Activated T-helper 2 cell treated with anti-CD3 and anti-CD28 coated beads, Interferon-gamma antibody, Interleukin-2, Interleukin-4, amounts not matched to agents 10 μg/mL and 5 μg/mL and 100 μg/mL, durations not matched to agents 14 hours and 24 hours and 36 hours (primary cell): ENCODE measurements at regions of chr4 and their contacts with region 1.

Region 1: GRCh38 chr4:83231620-83232076 is 53.0 kb downstream of the COQ2 start:
- DNase-seq: peak; percentile 60
- H3K4me3 Mint-ChIP-seq: no peak overlapping the region
- H3K27ac Mint-ChIP-seq: peak overlapping the region; percentile 2
- H3K4me1 Mint-ChIP-seq: peaks cover 54% of the 10 kb centered on the region
- H3K27me3 Mint-ChIP-seq: peaks cover 33% of the 10 kb centered on the region

Region 2: GRCh38 chr4:82868572-82868971 is 363.1 kb before region 1 on chr4:
- intact Hi-C with region 1: no loop called
- DNase-seq: no peak
- H3K4me3 Mint-ChIP-seq: no peak overlapping the region
- H3K27ac Mint-ChIP-seq: no peak overlapping the region
- H3K4me1 Mint-ChIP-seq: peaks cover 29% of the 10 kb centered on the region
- H3K27me3 Mint-ChIP-seq: no peaks in the 10 kb centered on the region

Region 3: DNA sequence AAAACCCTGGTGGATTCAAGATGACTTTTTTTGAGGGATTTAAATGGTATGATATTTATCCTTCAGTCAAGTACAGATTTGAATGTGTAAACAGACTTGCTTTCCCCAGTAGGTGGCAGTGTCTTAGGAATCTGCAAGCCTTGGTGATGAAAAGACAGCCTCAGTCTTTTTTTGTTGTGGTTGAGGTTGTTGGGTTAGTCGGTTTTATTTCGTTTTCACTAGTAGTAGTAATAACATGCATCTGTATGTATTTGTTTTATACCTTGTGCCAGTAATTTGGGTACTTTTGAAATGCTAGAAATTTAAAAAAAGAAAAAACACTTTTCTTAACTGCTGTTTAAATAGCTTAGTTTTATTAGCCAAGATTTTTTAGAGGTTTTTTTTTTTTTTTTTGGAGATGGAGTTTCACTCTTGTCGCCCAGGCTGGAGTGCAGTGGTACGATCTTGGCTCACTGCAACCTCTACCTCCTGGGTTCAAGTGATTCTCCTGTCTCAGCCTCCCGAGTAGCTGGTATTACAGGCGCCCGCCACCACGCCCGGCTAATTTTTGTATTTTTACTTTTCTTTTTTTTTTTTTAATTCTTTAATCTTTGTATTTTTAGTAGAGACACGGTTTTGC is 157.5 kb before region 1 on chr4:
- intact Hi-C with region 1: loop called (anchors 1 kb)
- DNase-seq: peak; percentile 62
- H3K4me3 Mint-ChIP-seq: no peak overlapping the region
- H3K27ac Mint-ChIP-seq: no peak overlapping the region
- H3K4me1 Mint-ChIP-seq: peaks cover 26% of the 10 kb centered on the region
- H3K27me3 Mint-ChIP-seq: no peaks in the 10 kb centered on the region

Region 4: GRCh38 chr4:83128240-83128929 is 103.3 kb before region 1 on chr4:
- intact Hi-C with region 1: loop called (anchors 5 kb)
- DNase-seq: no peak
- H3K4me3 Mint-ChIP-seq: no peak overlapping the region
- H3K27ac Mint-ChIP-seq: no peak overlapping the region
- H3K4me1 Mint-ChIP-seq: peaks cover 16% of the 10 kb centered on the region
- H3K27me3 Mint-ChIP-seq: peaks cover 5% of the 10 kb centered on the region

Region 5: GRCh38 chr4:83217721-83218522 is 13.7 kb before region 1 on chr4:
- intact Hi-C with region 1: loop called (anchors 1 kb)
- DNase-seq: peak; percentile 74
- H3K4me3 Mint-ChIP-seq: peak overlapping the region; percentile 56
- H3K27ac Mint-ChIP-seq: peak overlapping the region; percentile 84
- H3K4me1 Mint-ChIP-seq: peaks cover 64% of the 10 kb centered on the region
- H3K27me3 Mint-ChIP-seq: peaks cover 13% of the 10 kb centered on the region

Region 6: GRCh38 chr4:83267121-83267829 is 35.6 kb after region 1 on chr4:
- intact Hi-C with region 1: loop called (anchors 5 kb)
- DNase-seq: no peak
- H3K4me3 Mint-ChIP-seq: no peak overlapping the region
- H3K27ac Mint-ChIP-seq: no peak overlapping the region
- H3K4me1 Mint-ChIP-seq: peaks cover 29% of the 10 kb centered on the region
- H3K27me3 Mint-ChIP-seq: no peaks in the 10 kb centered on the region

Region 7: GRCh38 chr4:83276299-83277040 is 44.8 kb after region 1 on chr4:
- intact Hi-C with region 1: loop called (anchors 1 kb)
- DNase-seq: no peak
- H3K4me3 Mint-ChIP-seq: no peak overlapping the region
- H3K27ac Mint-ChIP-seq: peak overlapping the region; percentile 21
- H3K4me1 Mint-ChIP-seq: peaks cover 42% of the 10 kb centered on the region
- H3K27me3 Mint-ChIP-seq: peaks cover 3% of the 10 kb centered on the region

Region 8: GRCh38 chr4:83558680-83559079 is 327.0 kb after region 1 on chr4:
- intact Hi-C with region 1: loop called (anchors 5 kb)
- DNase-seq: no peak
- H3K4me3 Mint-ChIP-seq: peak overlapping the region; percentile 2
- H3K27ac Mint-ChIP-seq: peak overlapping the region; percentile 58
- H3K4me1 Mint-ChIP-seq: peaks cover 56% of the 10 kb centered on the region
- H3K27me3 Mint-ChIP-seq: peaks cover 13% of the 10 kb centered on the region

Region 9: GRCh38 chr4:83599183-83599582 is 367.5 kb after region 1 on chr4:
- intact Hi-C with region 1: no loop called
- DNase-seq: no peak
- H3K4me3 Mint-ChIP-seq: no peak overlapping the region
- H3K27ac Mint-ChIP-seq: no peak overlapping the region
- H3K4me1 Mint-ChIP-seq: no peaks in the 10 kb centered on the region
- H3K27me3 Mint-ChIP-seq: peaks cover 2% of the 10 kb centered on the region